ENCODE measurements at regions of chr1 and their contacts with region 1.

Region 1: GRCh38 chr1:67853704-67854103 is 20.4 kb upstream of the GNG12 start:
- DNase-seq: peak; percentile 57
- ATAC-seq: peak; percentile 60
- H3K4me3 Mint-ChIP-seq: no peak overlapping the region
- H3K27ac Mint-ChIP-seq: no peak overlapping the region
- H3K4me1 Mint-ChIP-seq: no peaks in the 10 kb centered on the region
- H3K27me3 Mint-ChIP-seq: peaks cover 14% of the 10 kb centered on the region

Region 2: GRCh38 chr1:67766141-67766978 is 87.3 kb before region 1 on chr1:
- CTCF ChIA-PET with region 1: interaction called, 5 read pairs
- POLR2A ChIA-PET with region 1: no interaction called
- intact Hi-C with region 1: loop called (anchors 2 to 5 kb)
- DNase-seq: peak; percentile 64
- ATAC-seq: peak; percentile 46
- H3K4me3 Mint-ChIP-seq: no peak overlapping the region
- H3K27ac Mint-ChIP-seq: no peak overlapping the region
- H3K4me1 Mint-ChIP-seq: peaks cover 12% of the 10 kb centered on the region
- H3K27me3 Mint-ChIP-seq: peaks cover 29% of the 10 kb centered on the region

Region 3: GRCh38 chr1:68051475-68051874 is 197.8 kb after region 1 on chr1:
- CTCF ChIA-PET with region 1: no interaction called
- POLR2A ChIA-PET with region 1: no interaction called
- intact Hi-C with region 1: loop called in 1 of 2 experiments (anchors 5 kb)
- DNase-seq: peak; percentile 19
- ATAC-seq: no peak
- H3K4me3 Mint-ChIP-seq: no peak overlapping the region
- H3K27ac Mint-ChIP-seq: no peak overlapping the region
- H3K4me1 Mint-ChIP-seq: peaks cover 3% of the 10 kb centered on the region
- H3K27me3 Mint-ChIP-seq: peaks cover 14% of the 10 kb centered on the region

Region 4: DNA sequence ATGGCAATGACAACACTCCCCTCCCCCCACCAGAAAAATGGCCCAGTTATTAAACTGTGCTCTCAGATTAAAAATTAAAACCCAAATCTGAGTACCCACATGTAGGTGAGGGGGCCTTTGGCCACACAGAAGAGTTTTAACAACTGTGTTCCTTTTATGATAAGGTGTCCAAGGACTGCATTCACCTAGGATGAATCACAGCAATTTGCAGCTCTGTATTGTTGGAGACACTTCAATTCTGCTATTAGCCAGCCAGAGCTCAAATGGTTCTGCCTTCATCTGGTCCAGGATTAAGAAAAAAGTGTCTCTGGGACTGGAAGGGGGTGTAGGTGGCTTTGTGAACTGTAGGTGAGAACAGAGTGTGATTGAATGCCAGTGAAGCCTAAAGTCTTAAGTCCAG is 240.0 kb after region 1 on chr1:
- CTCF ChIA-PET with region 1: no interaction called
- POLR2A ChIA-PET with region 1: no interaction called
- intact Hi-C with region 1: no loop called
- DNase-seq: no peak
- ATAC-seq: no peak
- H3K4me3 Mint-ChIP-seq: no peak overlapping the region
- H3K27ac Mint-ChIP-seq: no peak overlapping the region
- H3K4me1 Mint-ChIP-seq: no peaks in the 10 kb centered on the region
- H3K27me3 Mint-ChIP-seq: peaks cover 6% of the 10 kb centered on the region

Region 5: GRCh38 chr1:68120136-68120791 is 266.6 kb after region 1 on chr1:
- CTCF ChIA-PET with region 1: interaction called, 3 read pairs
- POLR2A ChIA-PET with region 1: no interaction called
- intact Hi-C with region 1: loop called in 1 of 2 experiments (anchors 1 kb)
- DNase-seq: peak; percentile 45
- ATAC-seq: peak; percentile 30
- H3K4me3 Mint-ChIP-seq: no peak overlapping the region
- H3K27ac Mint-ChIP-seq: no peak overlapping the region
- H3K4me1 Mint-ChIP-seq: peaks cover 4% of the 10 kb centered on the region
- H3K27me3 Mint-ChIP-seq: peaks cover 1% of the 10 kb centered on the region

Region 6: DNA sequence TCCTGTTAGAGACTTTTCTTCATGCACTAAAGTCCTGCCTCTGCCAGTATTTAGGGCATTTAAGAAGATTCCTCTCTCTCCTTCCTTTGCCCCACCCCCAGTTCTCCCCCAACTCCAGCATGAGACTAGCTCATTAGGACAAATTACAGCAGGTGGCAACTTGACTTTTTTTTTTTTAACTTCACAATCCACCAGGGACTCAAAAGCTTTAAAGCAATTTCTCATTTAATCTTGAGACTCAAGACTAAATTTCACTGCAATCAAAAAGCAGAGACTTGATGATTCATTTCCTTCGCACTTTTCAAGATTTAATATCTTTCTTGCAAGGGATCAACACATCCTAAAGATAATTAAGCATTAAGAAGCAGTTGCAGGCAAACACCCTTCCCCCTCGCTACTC is 303.7 kb after region 1 on chr1:
- CTCF ChIA-PET with region 1: no interaction called
- POLR2A ChIA-PET with region 1: no interaction called
- intact Hi-C with region 1: no loop called
- DNase-seq: no peak
- ATAC-seq: no peak
- H3K4me3 Mint-ChIP-seq: no peak overlapping the region
- H3K27ac Mint-ChIP-seq: no peak overlapping the region
- H3K4me1 Mint-ChIP-seq: no peaks in the 10 kb centered on the region
- H3K27me3 Mint-ChIP-seq: no peaks in the 10 kb centered on the region

Region 7: GRCh38 chr1:68442822-68443556 is 589.3 kb after region 1 on chr1:
- CTCF ChIA-PET with region 1: no interaction called
- POLR2A ChIA-PET with region 1: no interaction called
- intact Hi-C with region 1: loop called in 1 of 2 experiments (anchors 5 kb)
- DNase-seq: peak; percentile 37
- ATAC-seq: no peak
- H3K4me3 Mint-ChIP-seq: no peak overlapping the region
- H3K27ac Mint-ChIP-seq: no peak overlapping the region
- H3K4me1 Mint-ChIP-seq: no peaks in the 10 kb centered on the region
- H3K27me3 Mint-ChIP-seq: peaks cover 11% of the 10 kb centered on the region

Region 8: GRCh38 chr1:68644521-68644920 is 790.8 kb after region 1 on chr1:
- CTCF ChIA-PET with region 1: no interaction called
- POLR2A ChIA-PET with region 1: no interaction called
- intact Hi-C with region 1: no loop called
- DNase-seq: no peak
- ATAC-seq: no peak
- H3K4me3 Mint-ChIP-seq: no peak overlapping the region
- H3K27ac Mint-ChIP-seq: no peak overlapping the region
- H3K4me1 Mint-ChIP-seq: no peaks in the 10 kb centered on the region
- H3K27me3 Mint-ChIP-seq: no peaks in the 10 kb centered on the region